CD4-positive, alpha-beta memory T cell (primary cell): ENCODE measurements at regions of chr11 and their contacts with region 1.

Region 1: GRCh38 chr11:113377681-113378412 is 9.7 kb upstream of the ANKK1 start:
- DNase-seq: no peak
- H3K4me3 ChIP-seq: no peak overlapping the region
- H3K4me3 Mint-ChIP-seq: no peak overlapping the region
- H3K27ac ChIP-seq: no peak overlapping the region
- H3K27ac Mint-ChIP-seq: no peak overlapping the region
- H3K4me1 ChIP-seq: no peaks in the 10 kb centered on the region
- H3K4me1 Mint-ChIP-seq: no peaks in the 10 kb centered on the region
- H3K27me3 ChIP-seq: no peaks in the 10 kb centered on the region
- H3K27me3 Mint-ChIP-seq: no peaks in the 10 kb centered on the region

Region 2: DNA sequence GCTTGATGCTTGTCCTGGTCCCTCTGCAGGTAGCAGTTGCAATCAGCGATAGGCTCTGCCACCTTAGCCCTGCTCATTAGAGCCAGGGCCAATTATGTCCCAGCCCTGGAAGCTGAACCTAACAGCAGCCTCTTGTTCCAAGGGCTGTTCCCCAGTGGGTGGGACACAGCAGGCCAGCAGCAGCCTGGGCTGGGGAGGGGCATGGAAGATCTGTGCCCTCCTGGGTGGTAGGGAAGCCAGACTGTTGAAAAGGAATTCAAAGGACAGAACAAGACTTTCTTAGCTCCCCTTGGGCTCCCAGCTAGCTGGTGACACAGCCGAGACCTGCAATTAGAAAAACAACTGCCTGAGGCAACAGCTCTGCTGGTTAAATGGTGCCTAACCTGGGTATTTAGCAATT is 79.9 kb after region 1 on chr11:
- CTCF ChIA-PET with region 1: no interaction called
- POLR2A ChIA-PET with region 1: no interaction called
- intact Hi-C with region 1: loop called (anchors 2 kb)
- DNase-seq: no peak
- H3K4me3 ChIP-seq: no peak overlapping the region
- H3K4me3 Mint-ChIP-seq: no peak overlapping the region
- H3K27ac ChIP-seq: no peak overlapping the region
- H3K27ac Mint-ChIP-seq: no peak overlapping the region
- H3K4me1 ChIP-seq: no peaks in the 10 kb centered on the region
- H3K4me1 Mint-ChIP-seq: no peaks in the 10 kb centered on the region
- H3K27me3 ChIP-seq: no peaks in the 10 kb centered on the region
- H3K27me3 Mint-ChIP-seq: peaks cover 6 to 8% of the 10 kb centered on the region in 2 donors

Region 3: GRCh38 chr11:113562981-113563461 is 185.2 kb after region 1 on chr11:
- CTCF ChIA-PET with region 1: no interaction called
- POLR2A ChIA-PET with region 1: no interaction called
- intact Hi-C with region 1: no loop called
- DNase-seq: no peak
- H3K4me3 ChIP-seq: no peak overlapping the region
- H3K4me3 Mint-ChIP-seq: no peak overlapping the region
- H3K27ac ChIP-seq: no peak overlapping the region
- H3K27ac Mint-ChIP-seq: no peak overlapping the region
- H3K4me1 ChIP-seq: no peaks in the 10 kb centered on the region
- H3K4me1 Mint-ChIP-seq: no peaks in the 10 kb centered on the region
- H3K27me3 ChIP-seq: no peaks in the 10 kb centered on the region
- H3K27me3 Mint-ChIP-seq: peaks cover 6 to 11% of the 10 kb centered on the region in 2 donors